ENCODE measurements at regions of chr6 and their contacts with region 1.

Region 1: DNA sequence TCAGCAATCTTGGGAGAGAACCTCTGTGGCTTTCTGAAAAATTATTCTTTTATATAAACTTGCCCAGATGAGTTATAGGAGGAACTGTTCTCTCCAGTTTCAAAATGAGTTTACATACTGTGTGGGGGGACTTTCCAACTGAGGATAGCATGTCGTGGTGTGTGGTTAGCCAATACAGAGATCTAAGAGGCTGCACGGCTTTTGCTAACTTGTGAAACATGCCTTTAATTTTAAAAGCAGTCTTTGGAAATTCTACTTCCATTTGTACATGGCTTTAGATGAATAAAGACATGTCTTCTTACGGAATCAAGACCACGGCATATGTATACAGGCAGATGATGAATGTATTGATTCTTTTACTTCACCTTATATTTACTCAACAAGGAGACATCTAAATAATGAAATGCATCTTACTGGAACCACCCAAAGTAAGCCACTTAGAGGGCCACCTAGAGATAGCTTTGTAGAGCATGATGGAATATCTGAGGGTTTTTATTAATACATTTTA is 39.8 kb downstream of the HIVEP1 start:
- DNase-seq: peak; percentile 83
- H3K4me3 Mint-ChIP-seq: peak overlapping the region; percentile 36
- H3K27ac Mint-ChIP-seq: peak overlapping the region; percentile 88
- H3K4me1 Mint-ChIP-seq: peaks cover 76% of the 10 kb centered on the region
- H3K27me3 Mint-ChIP-seq: no peaks in the 10 kb centered on the region

Region 2: DNA sequence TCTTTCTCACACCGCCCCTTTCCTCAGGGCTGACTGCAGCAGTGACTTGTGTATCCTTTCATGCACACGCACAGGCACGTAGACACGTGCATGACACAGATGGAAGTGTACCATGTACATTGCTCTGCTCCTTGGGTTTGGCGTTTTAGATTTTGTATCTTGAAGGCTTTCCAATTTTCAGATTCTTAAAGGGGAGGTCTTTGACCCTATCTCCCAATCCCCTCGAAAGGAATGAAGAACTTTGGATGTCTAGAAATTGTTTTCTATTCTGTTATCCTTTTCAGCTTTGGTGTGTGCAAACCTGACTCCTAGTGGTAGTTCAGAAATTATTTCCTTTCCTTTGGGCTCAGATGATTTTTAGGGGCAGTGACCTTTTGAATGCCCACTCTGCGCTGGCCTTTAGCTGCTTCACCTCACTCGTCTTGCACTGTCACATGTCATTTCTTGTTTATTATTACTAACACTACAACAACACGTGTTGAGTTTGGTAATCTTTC is 23.2 kb after region 1 on chr6:
- CTCF ChIA-PET with region 1: no interaction called
- intact Hi-C with region 1: loop called (anchors 1 kb)
- DNase-seq: peak; percentile 56
- H3K4me3 Mint-ChIP-seq: no peak overlapping the region
- H3K27ac Mint-ChIP-seq: no peak overlapping the region
- H3K4me1 Mint-ChIP-seq: peaks cover 59% of the 10 kb centered on the region
- H3K27me3 Mint-ChIP-seq: no peaks in the 10 kb centered on the region

Region 3: GRCh38 chr6:12119085-12119588 is 67.2 kb after region 1 on chr6:
- CTCF ChIA-PET with region 1: no interaction called
- intact Hi-C with region 1: loop called (anchors 1 kb)
- DNase-seq: peak; percentile 73
- H3K4me3 Mint-ChIP-seq: peak overlapping the region; percentile 11
- H3K27ac Mint-ChIP-seq: peak overlapping the region; percentile 77
- H3K4me1 Mint-ChIP-seq: peaks cover 49% of the 10 kb centered on the region
- H3K27me3 Mint-ChIP-seq: no peaks in the 10 kb centered on the region

Region 4: DNA sequence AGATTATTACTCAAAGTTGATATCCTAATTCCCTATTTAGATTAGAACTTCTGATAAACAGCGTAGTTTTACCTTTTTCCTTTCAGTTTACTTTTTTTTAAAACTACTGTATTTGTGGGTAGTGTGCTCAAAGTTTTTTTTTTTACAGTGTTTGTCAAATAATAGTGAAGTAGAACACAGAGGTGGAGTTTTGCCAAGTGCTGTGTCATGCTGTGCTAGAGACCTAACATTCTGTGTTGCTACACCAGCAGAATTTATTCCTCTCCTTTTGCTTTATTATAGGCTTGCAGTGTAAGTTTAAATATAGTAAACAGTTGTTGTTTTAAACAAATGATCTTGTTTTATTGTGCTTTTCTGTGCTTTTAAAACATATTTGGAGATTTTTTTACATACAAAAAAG is 85.6 kb after region 1 on chr6:
- CTCF ChIA-PET with region 1: no interaction called
- intact Hi-C with region 1: no loop called
- DNase-seq: no peak
- H3K4me3 Mint-ChIP-seq: no peak overlapping the region
- H3K27ac Mint-ChIP-seq: no peak overlapping the region
- H3K4me1 Mint-ChIP-seq: peaks cover 26% of the 10 kb centered on the region
- H3K27me3 Mint-ChIP-seq: no peaks in the 10 kb centered on the region

Measured in activated naive CD4-positive, alpha-beta T cell treated with anti-CD3 and anti-CD28 coated beads for 36 hours (primary cell).